ENCODE measurements at regions of chr3 and their contacts with region 1.

Region 1: DNA sequence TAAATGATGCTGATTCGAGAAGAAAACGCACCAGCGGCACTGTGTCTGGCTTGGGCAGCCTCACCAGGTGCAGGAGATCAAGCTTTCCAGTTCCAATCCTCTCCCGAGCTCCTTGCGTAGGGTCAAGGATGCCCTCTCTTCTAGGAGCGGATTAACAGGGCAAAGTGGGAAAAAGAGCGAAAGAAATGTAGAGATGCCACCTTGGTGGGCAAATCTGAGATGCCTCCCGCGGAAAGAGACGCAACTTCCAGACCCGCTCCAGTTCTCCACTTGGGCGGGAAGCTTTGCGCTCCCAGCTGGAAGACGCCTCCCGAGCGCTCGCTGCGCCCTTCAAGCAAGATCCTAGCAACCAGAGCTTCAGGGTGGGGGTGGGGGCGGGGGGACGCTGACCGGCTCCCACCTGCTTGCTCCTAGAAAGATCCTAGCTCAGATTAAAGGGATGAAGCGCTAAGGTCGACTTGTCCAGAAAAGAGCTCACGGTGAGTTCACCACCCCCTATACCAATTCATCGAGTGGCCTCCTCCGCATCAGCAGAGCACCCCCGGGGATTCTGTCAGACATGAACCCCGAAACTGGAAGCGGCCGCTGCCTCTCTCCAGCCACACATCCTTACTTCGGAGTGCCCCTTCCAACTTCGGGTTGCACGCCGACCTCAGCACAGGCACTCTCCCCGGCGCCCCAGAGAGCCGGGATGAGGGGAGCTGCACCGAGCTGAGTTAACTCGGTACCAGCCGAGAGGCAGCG is 769 bp downstream of the TAFA4 start:
- DNase-seq: no peak
- H3K4me3 ChIP-seq: no peak overlapping the region
- H3K27ac ChIP-seq: no peak overlapping the region
- H3K4me1 ChIP-seq: peaks cover 0 to 2% of the 10 kb centered on the region in 2 experiments; a peak in 1 of 4 replicates
- H3K27me3 ChIP-seq: peaks cover 13% of the 10 kb centered on the region
- CTCF ChIP-seq: no peak
- EP300 ChIP-seq: no peak
- RAD21 ChIP-seq: no peak

Region 2: DNA sequence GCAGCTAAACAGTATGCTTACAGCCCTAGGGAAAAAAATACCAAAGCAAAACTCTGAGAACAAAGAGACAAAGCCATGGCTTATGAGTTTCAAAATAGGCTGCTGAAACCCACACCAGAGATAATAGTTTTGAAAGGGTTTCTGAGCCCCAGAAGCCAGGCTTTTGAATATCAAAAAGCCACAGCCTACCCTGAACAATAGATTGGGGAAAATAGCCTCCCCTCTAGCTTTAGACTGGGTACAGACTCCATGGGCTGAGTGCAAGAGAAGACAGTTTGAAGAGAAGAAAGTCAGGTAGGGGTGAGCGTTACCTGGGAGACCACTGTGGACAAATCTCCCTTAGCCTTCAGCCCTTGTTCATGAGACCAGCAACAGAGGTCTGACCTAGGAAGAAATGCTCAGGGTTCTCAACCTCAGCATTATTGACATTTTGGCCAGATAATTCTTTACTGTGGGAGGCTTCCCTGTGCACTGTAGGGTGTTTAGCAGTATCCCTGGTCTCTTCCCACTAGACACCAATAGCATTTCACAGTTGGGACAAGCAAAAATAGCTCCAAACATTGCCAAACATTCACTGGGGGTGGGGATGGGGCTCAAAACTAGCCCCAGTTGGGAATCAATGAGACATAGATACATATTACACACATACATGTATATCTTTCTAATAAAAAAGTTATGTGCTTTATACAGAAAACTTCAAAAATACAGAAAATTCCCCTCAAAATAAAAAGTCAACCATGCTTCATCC is 12.3 kb after region 1 on chr3:
- CTCF ChIA-PET with region 1: interaction called, 21 read pairs
- POLR2A ChIA-PET with region 1: no interaction called
- DNase-seq: no peak
- H3K4me3 ChIP-seq: no peak overlapping the region
- H3K27ac ChIP-seq: no peak overlapping the region
- H3K4me1 ChIP-seq: no peaks in the 10 kb centered on the region; a peak in 1 of 4 replicates
- H3K27me3 ChIP-seq: peaks cover 5% of the 10 kb centered on the region
- CTCF ChIP-seq: no peak
- EP300 ChIP-seq: no peak
- RAD21 ChIP-seq: no peak

Region 3: DNA sequence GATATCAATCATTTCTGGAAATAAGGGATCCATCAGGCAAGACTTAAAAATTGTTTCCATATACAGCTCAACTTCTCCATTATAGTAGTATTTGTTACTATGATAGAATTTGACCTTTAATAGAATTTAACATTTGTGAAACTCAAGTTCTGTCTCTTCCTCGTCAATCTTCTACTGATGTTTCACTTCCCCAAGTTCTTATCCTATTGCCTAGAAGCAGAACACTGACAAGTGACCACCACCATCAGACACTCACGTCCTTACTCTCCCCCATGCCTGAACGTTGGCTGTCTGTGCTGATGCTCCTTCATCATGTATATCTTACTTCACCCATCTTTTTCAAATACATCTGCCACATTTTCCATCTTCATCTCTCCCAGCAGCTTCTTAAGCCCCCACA is 27.4 kb after region 1 on chr3:
- CTCF ChIA-PET with region 1: no interaction called
- POLR2A ChIA-PET with region 1: no interaction called
- DNase-seq: no peak
- H3K4me3 ChIP-seq: no peak overlapping the region
- H3K27ac ChIP-seq: no peak overlapping the region
- H3K4me1 ChIP-seq: no peaks in the 10 kb centered on the region
- H3K27me3 ChIP-seq: no peaks in the 10 kb centered on the region; the same call in 1 of the 2 replicates
- CTCF ChIP-seq: no peak
- EP300 ChIP-seq: no peak
- RAD21 ChIP-seq: no peak

Region 4: DNA sequence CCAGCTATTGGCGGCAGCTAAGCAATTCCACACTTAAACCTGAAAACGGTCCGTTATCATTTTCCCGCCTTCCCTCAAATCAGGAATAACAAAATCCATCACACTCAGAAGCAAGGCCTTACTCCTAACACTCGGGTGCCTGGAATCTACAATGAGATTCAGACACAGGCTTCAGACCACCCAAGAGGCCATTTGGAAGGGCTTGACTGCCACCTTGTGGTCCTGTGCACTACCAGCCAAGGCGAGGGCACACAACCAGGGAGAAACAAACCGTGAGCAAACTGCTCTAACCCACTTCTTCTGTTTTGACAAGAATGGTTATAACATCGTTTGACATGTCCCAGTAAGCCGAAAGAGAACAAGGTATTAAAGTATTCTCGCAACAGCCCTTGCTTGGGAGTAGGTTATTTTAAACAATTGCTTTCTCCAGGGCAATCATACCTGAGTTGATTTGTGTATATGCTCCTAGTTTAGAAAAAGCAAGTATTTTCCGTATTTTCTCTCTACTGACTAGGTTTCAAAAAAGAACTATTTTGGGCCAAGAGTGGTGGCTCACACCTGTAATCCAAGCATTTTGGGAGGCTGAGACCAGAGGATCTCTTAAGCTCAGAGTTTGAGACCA is 40.9 kb after region 1 on chr3:
- CTCF ChIA-PET with region 1: interaction called, 10 read pairs
- POLR2A ChIA-PET with region 1: no interaction called
- DNase-seq: peak; percentile 64
- H3K4me3 ChIP-seq: no peak overlapping the region; a peak in 1 of 4 replicates
- H3K27ac ChIP-seq: no peak overlapping the region
- H3K4me1 ChIP-seq: no peaks in the 10 kb centered on the region
- H3K27me3 ChIP-seq: peaks cover 18% of the 10 kb centered on the region; the same call in 1 of the 2 replicates
- CTCF ChIP-seq: peak; percentile 87
- EP300 ChIP-seq: no peak
- RAD21 ChIP-seq: peak; percentile 96

Region 5: GRCh38 chr3:69009559-69010410 is 78.2 kb after region 1 on chr3:
- CTCF ChIA-PET with region 1: no interaction called
- POLR2A ChIA-PET with region 1: no interaction called
- DNase-seq: no peak
- H3K4me3 ChIP-seq: no peak overlapping the region
- H3K27ac ChIP-seq: no peak overlapping the region
- H3K4me1 ChIP-seq: peaks cover 0 to 15% of the 10 kb centered on the region in 2 experiments; a peak in 3 of 4 replicates
- H3K27me3 ChIP-seq: no peaks in the 10 kb centered on the region
- CTCF ChIP-seq: no peak
- EP300 ChIP-seq: no peak
- RAD21 ChIP-seq: no peak

Measured in SK-N-SH (cell line).